ENCODE measurements at regions of chr17 and their contacts with region 1.

Region 1: GRCh38 chr17:5430413-5430999 is 8.4 kb downstream of the C1QBP start:
- DNase-seq: no peak
- ATAC-seq: no peak
- H3K4me3 ChIP-seq: no peak overlapping the region
- H3K27ac ChIP-seq: no peak overlapping the region
- H3K4me1 ChIP-seq: no peaks in the 10 kb centered on the region
- H3K27me3 ChIP-seq: no peaks in the 10 kb centered on the region
- CTCF ChIP-seq: no peak

Region 2: DNA sequence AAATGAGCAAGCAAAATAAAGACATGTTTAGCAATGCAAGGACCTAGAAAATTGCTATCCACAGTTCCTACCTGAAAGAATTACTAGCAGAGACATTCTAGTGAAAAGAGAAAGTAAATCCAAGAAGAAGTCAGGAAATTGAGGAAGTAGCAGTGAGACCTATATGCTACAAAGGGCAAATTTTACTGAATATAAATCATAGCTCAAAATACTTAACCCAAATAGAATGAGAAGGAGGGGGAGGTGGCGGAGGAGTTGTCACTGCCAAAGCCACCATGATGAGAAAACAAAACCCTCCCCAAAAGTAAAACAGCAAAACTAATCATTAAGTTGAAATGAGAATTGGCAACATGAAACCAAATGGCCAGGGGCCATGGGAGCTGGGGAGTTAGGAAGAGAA is 1086.6 kb after region 1 on chr17:
- CTCF ChIA-PET with region 1: interaction called, 14 read pairs
- POLR2A ChIA-PET with region 1: no interaction called
- intact Hi-C with region 1: no loop called
- DNase-seq: no peak
- ATAC-seq: no peak
- H3K4me3 ChIP-seq: no peak overlapping the region
- H3K27ac ChIP-seq: no peak overlapping the region
- H3K4me1 ChIP-seq: no peaks in the 10 kb centered on the region
- H3K27me3 ChIP-seq: no peaks in the 10 kb centered on the region
- CTCF ChIP-seq: no peak

Region 3: DNA sequence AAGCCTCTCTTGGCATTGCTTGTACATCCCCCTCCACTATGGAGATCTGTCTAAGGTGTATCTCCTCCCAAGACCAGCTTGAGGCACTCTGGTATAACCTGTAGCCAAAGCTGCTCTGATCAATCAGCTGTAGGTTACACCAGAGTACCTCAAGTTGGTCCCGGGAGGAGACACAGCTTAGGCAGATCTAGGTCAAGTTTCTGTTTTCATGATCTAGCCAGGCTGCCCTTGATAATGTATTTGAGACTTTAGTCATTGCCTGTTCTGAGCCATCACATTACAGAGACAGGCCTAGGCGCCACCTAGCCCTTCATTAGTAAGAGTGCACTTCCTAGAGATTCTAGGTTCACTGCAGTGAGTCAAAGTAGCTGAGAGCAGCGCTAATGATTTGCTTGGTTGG is 1717.3 kb after region 1 on chr17:
- CTCF ChIA-PET with region 1: no interaction called
- POLR2A ChIA-PET with region 1: interaction called, 23 read pairs
- intact Hi-C with region 1: no loop called
- DNase-seq: no peak
- ATAC-seq: peak; percentile 37; the same call in 1 of the 2 replicates
- H3K4me3 ChIP-seq: no peak overlapping the region
- H3K27ac ChIP-seq: no peak overlapping the region
- H3K4me1 ChIP-seq: no peaks in the 10 kb centered on the region
- H3K27me3 ChIP-seq: no peaks in the 10 kb centered on the region
- CTCF ChIP-seq: no peak

Measured in PC-3 (cell line).